Heart left ventricle (tissue), 16 donors: ENCODE measurements at regions of chr6 and their contacts with region 1.

Region 1: GRCh38 chr6:97394160-97394748 is 111.2 kb upstream of the MMS22L start:
- DNase-seq: peak in 2 of 5 donors; percentile 11 to 28
- ATAC-seq: peak in 2 of 4 donors; percentile 67 to 69
- H3K4me3 ChIP-seq: no peak overlapping the region
- H3K27ac ChIP-seq: no peak overlapping the region
- H3K4me1 ChIP-seq: no peaks in the 10 kb centered on the region
- H3K27me3 ChIP-seq: no peaks in the 10 kb centered on the region
- CTCF ChIP-seq: peak; percentile 80 to 98 (median 89)
- POLR2A ChIP-seq: no peak

Region 2: GRCh38 chr6:97068211-97068610 is 326.0 kb before region 1 on chr6:
- intact Hi-C with region 1: loop called in 9 of 10 experiments (anchors 5 to 10 kb)
- DNase-seq: no peak
- ATAC-seq: no peak
- H3K4me3 ChIP-seq: no peak overlapping the region
- H3K27ac ChIP-seq: no peak overlapping the region
- H3K4me1 ChIP-seq: no peaks in the 10 kb centered on the region
- H3K27me3 ChIP-seq: no peaks in the 10 kb centered on the region
- CTCF ChIP-seq: peak in 10 of 12 donors; percentile 17 to 62 (median 48)
- POLR2A ChIP-seq: no peak

Region 3: DNA sequence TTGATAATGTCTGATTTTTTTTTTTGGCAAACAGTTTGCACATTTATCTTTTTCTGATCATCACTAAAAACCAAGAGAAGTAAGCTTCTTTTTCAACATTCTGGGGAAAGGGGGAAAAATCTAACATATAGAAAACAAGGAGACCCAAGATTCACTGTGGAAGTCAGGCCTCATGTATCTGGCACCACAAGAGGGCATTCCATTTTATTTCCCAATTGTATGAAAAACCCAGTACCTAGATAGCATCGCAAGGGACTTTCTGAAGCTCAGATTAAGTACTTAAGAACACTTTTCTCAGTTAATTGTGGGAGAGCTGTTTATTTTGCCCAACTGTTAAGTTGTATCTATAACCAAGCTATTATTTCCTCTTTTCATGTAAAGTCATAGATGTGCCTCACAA is 316.9 kb before region 1 on chr6:
- intact Hi-C with region 1: loop called in 2 of 10 experiments (anchors 5 to 10 kb)
- DNase-seq: no peak
- ATAC-seq: no peak
- H3K4me3 ChIP-seq: no peak overlapping the region
- H3K27ac ChIP-seq: no peak overlapping the region
- H3K4me1 ChIP-seq: no peaks in the 10 kb centered on the region
- H3K27me3 ChIP-seq: no peaks in the 10 kb centered on the region
- CTCF ChIP-seq: no peak
- POLR2A ChIP-seq: no peak

Region 4: GRCh38 chr6:97186416-97186999 is 207.7 kb before region 1 on chr6:
- intact Hi-C with region 1: loop called (anchors 1 to 5 kb)
- DNase-seq: peak; percentile 45 to 60 (median 50)
- ATAC-seq: peak in 3 of 4 donors; percentile 61 to 74 (median 66)
- H3K4me3 ChIP-seq: no peak overlapping the region
- H3K27ac ChIP-seq: no peak overlapping the region
- H3K4me1 ChIP-seq: peaks cover 0 to 3% (median 0%) of the 10 kb centered on the region in 12 donors
- H3K27me3 ChIP-seq: no peaks in the 10 kb centered on the region
- CTCF ChIP-seq: peak; percentile 70 to 92 (median 85)
- POLR2A ChIP-seq: no peak

Region 5: DNA sequence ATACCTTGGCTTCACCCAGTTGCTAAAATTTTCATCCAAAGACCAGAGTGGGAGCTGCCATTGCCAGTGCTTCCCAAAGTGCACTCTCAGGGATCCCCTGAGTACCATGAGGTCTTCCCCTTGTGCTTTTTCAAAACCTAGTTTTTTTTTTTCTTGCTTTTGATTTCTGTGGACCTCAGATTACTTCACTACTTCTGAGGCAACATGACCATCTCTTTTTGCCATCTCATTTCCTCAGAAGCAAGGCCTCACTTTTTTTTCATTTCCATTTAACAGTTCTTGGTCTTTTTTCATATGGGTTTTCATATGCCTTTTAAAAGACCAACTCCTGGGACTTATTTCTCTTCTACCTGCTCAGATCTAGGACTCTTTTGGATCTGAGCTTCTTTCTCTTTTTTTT is 47.1 kb before region 1 on chr6:
- intact Hi-C with region 1: no loop called
- DNase-seq: no peak
- ATAC-seq: no peak
- H3K4me3 ChIP-seq: no peak overlapping the region
- H3K27ac ChIP-seq: no peak overlapping the region
- H3K4me1 ChIP-seq: no peaks in the 10 kb centered on the region
- H3K27me3 ChIP-seq: no peaks in the 10 kb centered on the region
- CTCF ChIP-seq: no peak
- POLR2A ChIP-seq: no peak